Naive thymus-derived CD4-positive, alpha-beta T cell (primary cell): ENCODE measurements at regions of chr10 and their contacts with region 1.

Region 1: GRCh38 chr10:102503281-102504220 is at the start of gene SUFU:
- DNase-seq: peak; percentile 91 to 99 (median 98)
- ATAC-seq: peak; percentile 85
- H3K4me3 ChIP-seq: peak within 1 kb of the TSS; percentile 92
- H3K4me3 Mint-ChIP-seq: no peak within 1 kb of the TSS
- H3K27ac ChIP-seq: peak within 1 kb of the TSS; percentile 88
- H3K27ac Mint-ChIP-seq: peak within 1 kb of the TSS in 7 of 9 donors; percentile 78 to 95 (median 83)
- H3K4me1 ChIP-seq: peaks cover 19 to 29% of the 10 kb centered on the region in 2 donors
- H3K4me1 Mint-ChIP-seq: peaks cover 22 to 49% (median 41%) of the 10 kb centered on the region in 7 donors
- H3K27me3 ChIP-seq: no peaks in the 10 kb centered on the region
- H3K27me3 Mint-ChIP-seq: no peaks in the 10 kb centered on the region
- total RNA-seq, gene SUFU: 10.7 to 17.5 (median 16.1) TPM

Region 2: DNA sequence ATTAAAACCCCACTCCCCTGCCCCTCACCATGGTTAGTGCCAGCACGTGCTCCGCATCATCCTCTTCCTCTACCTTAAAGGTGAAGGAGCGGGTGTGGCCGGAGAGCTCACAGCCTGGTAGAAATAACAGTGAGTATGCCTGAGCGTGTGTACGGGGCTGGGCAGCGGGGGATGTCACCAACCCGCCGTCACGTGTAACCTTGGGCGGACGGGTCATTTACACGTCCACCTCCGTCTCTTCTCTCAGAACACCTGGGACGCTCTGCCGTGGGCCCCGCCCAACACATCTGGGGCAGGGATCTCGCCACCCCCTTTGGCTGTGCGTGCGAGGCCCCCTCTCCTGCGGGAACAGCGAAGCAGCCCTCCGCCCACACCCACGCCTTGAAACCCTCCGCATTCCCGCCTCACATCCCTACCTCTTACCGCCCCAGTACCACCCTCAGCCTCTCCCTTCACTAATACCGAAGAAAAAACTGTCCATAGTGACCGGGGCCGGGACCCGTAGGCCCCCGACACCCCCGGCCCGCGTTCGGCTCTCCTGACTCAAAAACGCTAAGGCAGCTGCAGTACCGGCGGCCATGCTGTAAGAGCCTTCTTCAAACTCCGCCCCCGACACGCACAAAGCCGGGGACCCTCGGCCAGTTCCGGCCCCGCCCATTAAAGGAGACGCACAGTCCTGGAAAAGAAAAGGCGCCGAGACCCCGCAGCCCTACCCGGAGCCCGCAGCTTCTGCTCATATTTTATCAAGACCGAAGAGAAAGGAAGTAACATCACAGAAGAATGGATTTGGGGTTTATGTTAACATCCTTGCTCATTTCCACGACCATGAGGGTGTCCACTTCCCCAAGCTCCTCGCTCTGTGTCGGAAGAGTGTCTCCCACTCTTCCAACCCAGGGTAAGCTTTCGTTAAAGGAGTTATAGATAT is 720.5 kb before region 1 on chr10 and contains the start of gene NPM3:
- CTCF ChIA-PET with region 1: no interaction called
- POLR2A ChIA-PET with region 1: no interaction called
- intact Hi-C with region 1: loop called in 1 of 2 experiments (anchors 1 kb)
- DNase-seq: peak in 8 of 9 donors; percentile 68 to 84 (median 77)
- ATAC-seq: peak; percentile 82
- H3K4me3 ChIP-seq: peak within 1 kb of the TSS; percentile 68
- H3K4me3 Mint-ChIP-seq: peak within 1 kb of the TSS; percentile 92 to 100 (median 99)
- H3K27ac ChIP-seq: peak within 1 kb of the TSS; percentile 81
- H3K27ac Mint-ChIP-seq: peak within 1 kb of the TSS; percentile 65 to 98 (median 96)
- H3K4me1 ChIP-seq: peaks cover 32 to 49% of the 10 kb centered on the region in 2 donors
- H3K4me1 Mint-ChIP-seq: peaks cover 36 to 76% (median 61%) of the 10 kb centered on the region in 7 donors
- H3K27me3 ChIP-seq: peaks cover 0 to 11% of the 10 kb centered on the region in 2 donors
- H3K27me3 Mint-ChIP-seq: peaks cover 8 to 17% (median 10%) of the 10 kb centered on the region in 5 donors
- total RNA-seq, gene NPM3: 10.9 to 31.3 (median 16.2) TPM

Region 3: DNA sequence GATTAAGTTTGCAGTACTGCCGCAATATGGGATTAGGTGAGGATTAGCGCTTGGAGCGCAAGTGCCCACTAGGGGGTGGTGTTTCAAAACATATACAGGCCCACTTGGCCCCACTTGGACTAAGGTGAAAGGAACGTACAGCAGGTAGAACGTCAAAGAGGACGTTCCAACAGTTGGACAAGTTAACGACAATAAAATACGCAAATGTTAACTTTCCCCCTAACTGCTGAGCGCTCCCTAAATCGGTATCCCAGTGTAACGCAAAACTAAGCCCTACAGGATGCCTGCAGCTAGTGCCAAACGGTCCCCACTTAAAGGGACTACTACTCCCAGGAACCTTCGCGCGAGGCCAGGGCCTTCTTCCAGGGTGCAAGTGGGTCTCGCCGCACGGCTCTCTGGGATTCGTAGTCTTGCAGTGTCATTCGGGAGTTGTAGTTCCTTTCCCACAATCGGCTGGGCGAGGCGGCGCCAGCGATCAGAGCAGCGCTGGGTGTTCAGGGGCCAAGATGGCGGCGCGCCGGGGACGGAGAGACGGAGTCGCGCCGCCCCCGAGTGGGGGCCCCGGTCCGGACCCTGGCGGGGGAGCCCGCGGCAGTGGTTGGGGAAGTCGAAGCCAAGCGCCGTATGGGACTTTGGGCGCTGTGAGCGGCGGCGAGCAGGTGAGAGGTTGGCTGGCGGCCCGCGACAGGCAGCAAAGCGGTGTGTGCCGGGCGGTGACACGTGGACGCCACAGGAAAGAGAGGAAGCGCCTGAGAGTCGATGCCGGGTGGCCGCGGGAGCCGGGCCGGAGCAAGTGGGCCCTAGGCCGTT is 370.8 kb before region 1 on chr10 and contains the start of gene PPRC1:
- CTCF ChIA-PET with region 1: no interaction called
- POLR2A ChIA-PET with region 1: no interaction called
- intact Hi-C with region 1: loop called (anchors 1 kb)
- DNase-seq: peak; percentile 88 to 98 (median 97)
- ATAC-seq: peak; percentile 97
- H3K4me3 ChIP-seq: peak within 1 kb of the TSS; percentile 80
- H3K4me3 Mint-ChIP-seq: peak within 1 kb of the TSS; percentile 90 to 99 (median 98)
- H3K27ac ChIP-seq: peak within 1 kb of the TSS; percentile 89
- H3K27ac Mint-ChIP-seq: peak within 1 kb of the TSS; percentile 89 to 99 (median 96)
- H3K4me1 ChIP-seq: peaks cover 15 to 26% of the 10 kb centered on the region in 2 donors
- H3K4me1 Mint-ChIP-seq: peaks cover 29 to 53% (median 47%) of the 10 kb centered on the region in 7 donors
- H3K27me3 ChIP-seq: no peaks in the 10 kb centered on the region
- H3K27me3 Mint-ChIP-seq: no peaks in the 10 kb centered on the region
- total RNA-seq, gene PPRC1: 33.7 to 56.5 (median 40.6) TPM

Region 4: GRCh38 chr10:102408728-102409603 is 94.6 kb before region 1 on chr10:
- CTCF ChIA-PET with region 1: no interaction called
- POLR2A ChIA-PET with region 1: no interaction called
- intact Hi-C with region 1: loop called in 1 of 2 experiments (anchors 1 kb)
- DNase-seq: peak; percentile 53 to 88 (median 76)
- ATAC-seq: peak; percentile 79
- H3K4me3 ChIP-seq: peak overlapping the region; percentile 66
- H3K4me3 Mint-ChIP-seq: peak overlapping the region; percentile 73 to 91 (median 87)
- H3K27ac ChIP-seq: peak overlapping the region; percentile 72
- H3K27ac Mint-ChIP-seq: peak overlapping the region; percentile 42 to 92 (median 87)
- H3K4me1 ChIP-seq: peaks cover 5 to 36% of the 10 kb centered on the region in 2 donors
- H3K4me1 Mint-ChIP-seq: peaks cover 22 to 50% (median 42%) of the 10 kb centered on the region in 7 donors
- H3K27me3 ChIP-seq: peaks cover 0 to 12% of the 10 kb centered on the region in 2 donors
- H3K27me3 Mint-ChIP-seq: peaks cover 0 to 32% (median 18%) of the 10 kb centered on the region in 5 donors

Region 5: GRCh38 chr10:102523250-102524029 is 19.9 kb after region 1 on chr10:
- CTCF ChIA-PET with region 1: no interaction called
- POLR2A ChIA-PET with region 1: no interaction called
- intact Hi-C with region 1: no loop called
- DNase-seq: no peak
- ATAC-seq: no peak
- H3K4me3 ChIP-seq: no peak overlapping the region
- H3K4me3 Mint-ChIP-seq: no peak overlapping the region
- H3K27ac ChIP-seq: no peak overlapping the region
- H3K27ac Mint-ChIP-seq: no peak overlapping the region
- H3K4me1 ChIP-seq: no peaks in the 10 kb centered on the region
- H3K4me1 Mint-ChIP-seq: peaks cover 6 to 27% (median 14%) of the 10 kb centered on the region in 7 donors
- H3K27me3 ChIP-seq: no peaks in the 10 kb centered on the region
- H3K27me3 Mint-ChIP-seq: no peaks in the 10 kb centered on the region

Region 6: GRCh38 chr10:102540023-102540422 is 36.5 kb after region 1 on chr10:
- CTCF ChIA-PET with region 1: interaction called, 3 read pairs
- POLR2A ChIA-PET with region 1: no interaction called
- intact Hi-C with region 1: loop called in 1 of 2 experiments (anchors 2 kb)
- DNase-seq: no peak
- ATAC-seq: no peak
- H3K4me3 ChIP-seq: no peak overlapping the region
- H3K4me3 Mint-ChIP-seq: no peak overlapping the region
- H3K27ac ChIP-seq: no peak overlapping the region
- H3K27ac Mint-ChIP-seq: peak overlapping the region in 1 of 9 donors; percentile 17
- H3K4me1 ChIP-seq: no peaks in the 10 kb centered on the region
- H3K4me1 Mint-ChIP-seq: peaks cover 4 to 14% (median 12%) of the 10 kb centered on the region in 7 donors
- H3K27me3 ChIP-seq: no peaks in the 10 kb centered on the region
- H3K27me3 Mint-ChIP-seq: no peaks in the 10 kb centered on the region

Region 7: GRCh38 chr10:102743588-102744373 is 240.2 kb after region 1 on chr10 and contains the start of gene WBP1L:
- CTCF ChIA-PET with region 1: no interaction called
- POLR2A ChIA-PET with region 1: no interaction called
- intact Hi-C with region 1: loop called (anchors 1 kb)
- DNase-seq: peak; percentile 77 to 98 (median 96)
- ATAC-seq: peak; percentile 98
- H3K4me3 ChIP-seq: peak within 1 kb of the TSS; percentile 85
- H3K4me3 Mint-ChIP-seq: peak within 1 kb of the TSS; percentile 80 to 97 (median 93)
- H3K27ac ChIP-seq: peak within 1 kb of the TSS; percentile 77
- H3K27ac Mint-ChIP-seq: peak within 1 kb of the TSS; percentile 57 to 96 (median 90)
- H3K4me1 ChIP-seq: peaks cover 17 to 25% of the 10 kb centered on the region in 2 donors
- H3K4me1 Mint-ChIP-seq: peaks cover 33 to 59% (median 48%) of the 10 kb centered on the region in 7 donors
- H3K27me3 ChIP-seq: no peaks in the 10 kb centered on the region
- H3K27me3 Mint-ChIP-seq: no peaks in the 10 kb centered on the region
- total RNA-seq, gene WBP1L: 20.5 to 37.9 (median 34.1) TPM

Region 8: DNA sequence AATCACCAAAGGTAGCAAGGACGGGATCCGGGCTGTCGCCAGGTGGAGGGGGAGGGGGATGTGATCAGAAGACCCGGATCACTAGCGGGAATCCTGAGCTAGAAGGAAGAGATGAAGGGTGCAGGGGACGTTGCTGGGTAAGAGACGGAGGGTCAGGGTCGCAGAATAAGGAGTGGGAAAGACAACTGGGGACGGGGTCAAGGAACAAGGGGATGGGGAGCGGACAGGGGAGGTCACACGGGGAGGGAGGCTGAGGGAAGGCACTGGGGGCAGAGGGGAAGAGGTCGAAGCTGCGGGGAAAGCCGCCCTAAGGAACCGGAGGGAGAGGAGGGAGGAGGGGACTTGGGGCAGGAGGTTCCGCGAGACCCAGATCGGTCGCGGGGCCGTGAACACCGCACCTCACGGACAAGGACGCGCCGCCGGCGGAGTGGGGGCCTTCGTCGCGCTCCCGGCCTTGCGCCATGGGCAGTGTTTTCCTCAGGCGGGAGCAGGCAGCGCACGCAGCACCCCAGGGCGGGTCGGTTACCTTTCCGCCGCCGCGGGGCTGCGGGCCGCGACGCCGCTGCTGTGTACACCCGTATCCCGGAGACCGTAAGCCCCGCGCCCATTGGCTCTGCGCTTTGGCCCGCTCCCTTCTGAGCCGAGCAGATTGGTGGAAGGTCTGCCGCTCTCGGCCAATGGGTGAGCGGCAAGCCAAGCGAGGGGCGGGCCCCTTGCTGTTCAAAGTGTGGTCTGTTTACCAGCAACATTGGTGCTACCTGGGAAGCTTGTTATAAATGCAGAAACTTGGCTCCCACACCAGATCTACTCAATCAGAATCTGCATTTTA is 1728.4 kb after region 1 on chr10 and contains the start of gene CFAP43:
- CTCF ChIA-PET with region 1: no interaction called
- POLR2A ChIA-PET with region 1: no interaction called
- intact Hi-C with region 1: loop called in 1 of 2 experiments (anchors 5 kb)
- DNase-seq: peak; percentile 99 to 100 (median 99)
- ATAC-seq: peak; percentile 100
- H3K4me3 ChIP-seq: peak within 1 kb of the TSS; percentile 74
- H3K4me3 Mint-ChIP-seq: peak within 1 kb of the TSS; percentile 84 to 95 (median 91)
- H3K27ac ChIP-seq: peak within 1 kb of the TSS; percentile 44
- H3K27ac Mint-ChIP-seq: peak within 1 kb of the TSS; percentile 63 to 95 (median 86)
- H3K4me1 ChIP-seq: peaks cover 0 to 6% of the 10 kb centered on the region in 2 donors
- H3K4me1 Mint-ChIP-seq: peaks cover 6 to 18% (median 13%) of the 10 kb centered on the region in 7 donors
- H3K27me3 ChIP-seq: peaks cover 0 to 7% of the 10 kb centered on the region in 2 donors
- H3K27me3 Mint-ChIP-seq: peaks cover 10 to 58% (median 19%) of the 10 kb centered on the region in 5 donors
- total RNA-seq, gene CFAP43: 0.17 TPM in 1 of 5 experiments, not detected in the others